Right ventricle myocardium superior (tissue), 1 donor: ENCODE measurements at regions of chr7 and their contacts with region 1.

Region 1: DNA sequence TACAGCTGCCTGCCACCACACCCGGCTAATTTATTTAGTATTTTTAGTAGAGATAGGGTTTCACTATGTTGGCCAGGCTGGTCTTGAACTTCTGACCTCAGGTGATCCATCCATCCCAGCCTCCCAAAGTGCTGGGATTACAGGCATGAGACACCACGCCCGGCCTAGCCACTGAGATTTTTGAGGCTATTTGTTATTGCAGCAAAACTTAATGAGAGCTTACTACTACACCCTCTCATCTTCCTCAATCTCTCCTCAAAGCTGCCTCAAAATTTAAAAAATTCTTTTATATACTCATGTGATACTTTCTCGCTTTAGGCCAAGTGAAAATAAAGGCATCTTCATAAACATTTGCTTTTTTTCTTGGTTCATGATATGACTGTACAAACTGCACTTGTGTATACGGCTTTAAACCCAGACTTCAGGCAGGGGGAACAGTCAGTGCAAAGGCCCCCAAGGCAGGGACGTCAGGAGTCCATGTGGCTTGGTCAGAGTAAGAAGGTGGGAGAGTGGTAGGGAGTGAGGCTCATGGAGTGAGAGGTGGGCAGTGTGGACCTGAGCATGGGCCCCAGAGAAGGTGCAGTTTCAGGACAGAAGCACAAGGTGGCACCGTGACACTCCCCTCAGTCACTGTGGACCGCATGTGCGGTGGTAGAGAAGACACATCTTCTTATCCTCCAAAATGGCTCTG is 55.5 kb downstream of the SYPL1 start:
- DNase-seq: peak; percentile 73
- ATAC-seq: peak; percentile 97

Region 2: GRCh38 chr7:105589356-105590077 is 467.1 kb before region 1 on chr7:
- intact Hi-C with region 1: no loop called
- DNase-seq: peak; percentile 51
- ATAC-seq: peak; percentile 85

Region 3: DNA sequence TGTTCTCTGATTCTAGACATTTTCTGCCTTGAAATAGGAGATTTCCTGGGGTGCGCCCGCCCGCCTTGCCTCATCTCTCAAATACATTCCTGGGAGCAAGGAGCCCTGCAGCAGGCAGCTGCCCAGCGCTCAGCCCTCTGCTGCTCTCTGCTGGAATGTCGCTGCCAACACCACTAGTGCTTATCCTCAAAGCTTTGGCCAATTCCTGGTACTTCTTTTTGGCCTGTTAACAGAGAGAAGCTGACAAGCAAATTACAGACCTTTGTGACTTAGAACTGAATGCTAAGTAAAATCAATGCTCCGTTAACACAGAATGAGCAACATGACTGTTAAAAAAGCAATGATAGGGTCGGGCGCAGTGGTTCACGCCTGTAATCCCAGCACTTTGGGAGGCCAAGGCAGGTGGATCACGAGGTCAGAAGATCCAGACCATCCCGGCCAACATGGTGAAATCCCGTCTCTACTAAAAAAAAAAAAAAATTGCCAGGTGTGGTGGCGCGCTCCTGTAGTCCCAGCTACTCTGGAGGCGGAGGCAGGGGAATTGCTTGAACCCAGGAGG is 97.3 kb after region 1 on chr7:
- intact Hi-C with region 1: loop called (anchors 1 kb)
- DNase-seq: peak; percentile 88
- ATAC-seq: peak; percentile 99

Region 4: GRCh38 chr7:106461993-106462859 is 405.6 kb after region 1 on chr7:
- intact Hi-C with region 1: loop called (anchors 10 kb)
- DNase-seq: peak; percentile 23
- ATAC-seq: peak; percentile 63